ENCODE measurements at regions of chr3 and their contacts with region 1.

Region 1: DNA sequence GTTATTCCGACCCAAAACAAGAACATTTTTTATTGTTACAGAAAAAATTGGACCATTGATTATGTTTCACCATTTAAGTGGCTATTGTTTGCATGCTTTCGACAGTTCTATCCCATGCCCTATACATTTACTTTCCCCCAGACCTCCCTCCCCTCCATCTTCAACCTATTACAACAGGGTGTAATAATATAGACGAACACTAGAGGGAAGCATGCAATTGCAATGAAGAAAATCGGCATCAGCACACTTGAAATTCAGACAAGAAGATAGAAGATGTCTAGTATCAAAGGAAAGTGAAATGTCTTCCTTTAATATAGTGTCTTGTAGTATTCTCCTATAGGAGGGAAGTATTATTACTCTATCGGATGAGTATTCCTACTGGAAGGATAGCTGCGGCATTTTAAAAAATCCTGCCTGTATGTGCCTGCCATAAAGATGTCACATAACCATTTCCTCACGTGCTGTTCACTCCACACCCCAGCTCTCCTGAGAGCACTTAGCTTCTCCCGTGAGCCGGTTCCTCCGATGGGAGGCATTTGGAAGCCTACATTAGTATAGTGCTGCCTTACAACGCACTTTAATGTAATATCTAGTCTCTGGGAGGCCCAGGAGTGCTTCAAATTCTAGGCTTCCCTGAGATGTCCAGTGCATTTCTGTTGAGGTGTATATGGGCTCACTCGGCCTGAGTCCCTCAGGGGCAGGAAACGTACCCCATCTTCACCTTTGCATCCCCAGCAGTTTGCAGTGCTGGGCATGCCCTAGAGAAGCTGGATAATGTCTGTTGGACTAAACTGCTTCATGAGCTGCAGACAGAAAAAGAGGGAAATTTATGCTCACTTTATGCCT is 17.8 kb upstream of the ERICH6 start:
- DNase-seq: no peak
- H3K4me3 Mint-ChIP-seq: peak overlapping the region; percentile 29
- H3K27ac Mint-ChIP-seq: no peak overlapping the region
- H3K4me1 Mint-ChIP-seq: peaks cover 24% of the 10 kb centered on the region
- H3K27me3 Mint-ChIP-seq: no peaks in the 10 kb centered on the region

Region 2: DNA sequence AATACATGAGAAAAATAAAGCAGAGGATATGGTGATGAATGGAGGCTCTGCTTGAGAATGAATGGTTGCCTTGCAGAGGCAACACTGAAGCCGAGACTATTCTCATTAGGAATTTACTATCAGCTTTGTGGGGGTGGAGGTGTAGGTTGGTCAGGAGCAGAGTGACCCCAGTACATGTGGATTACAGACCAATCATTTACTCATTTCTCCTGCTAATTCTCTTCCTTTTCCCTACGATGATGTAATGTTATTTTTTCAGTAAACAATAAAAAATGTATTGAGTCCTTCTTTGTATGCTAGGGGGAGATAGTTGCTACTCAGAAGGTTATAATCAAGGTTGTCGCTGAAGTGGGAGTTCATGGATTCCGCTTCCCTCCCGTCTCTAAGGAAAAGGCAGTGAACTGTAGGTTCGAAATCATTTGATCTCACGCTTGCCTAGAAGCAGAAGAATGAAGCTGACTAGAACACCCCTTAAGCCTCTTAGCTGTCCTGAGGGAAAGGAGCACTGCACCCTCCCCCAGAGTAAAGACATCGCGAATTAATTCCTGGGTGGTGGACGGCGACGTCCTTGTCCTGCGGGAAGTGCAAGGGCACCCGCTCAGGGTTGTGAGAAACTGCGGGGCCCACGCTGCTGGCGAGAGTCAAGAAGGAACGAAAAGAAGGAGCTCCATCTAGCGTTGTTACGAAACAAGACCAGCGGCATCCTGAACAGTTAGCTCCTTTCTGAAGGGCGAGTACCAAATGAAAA is 537.7 kb before region 1 on chr3:
- CTCF ChIA-PET with region 1: no interaction called
- POLR2A ChIA-PET with region 1: no interaction called
- intact Hi-C with region 1: no loop called
- DNase-seq: peak; percentile 64
- H3K4me3 Mint-ChIP-seq: no peak overlapping the region
- H3K27ac Mint-ChIP-seq: no peak overlapping the region
- H3K4me1 Mint-ChIP-seq: no peaks in the 10 kb centered on the region
- H3K27me3 Mint-ChIP-seq: peaks cover 3% of the 10 kb centered on the region

Region 3: DNA sequence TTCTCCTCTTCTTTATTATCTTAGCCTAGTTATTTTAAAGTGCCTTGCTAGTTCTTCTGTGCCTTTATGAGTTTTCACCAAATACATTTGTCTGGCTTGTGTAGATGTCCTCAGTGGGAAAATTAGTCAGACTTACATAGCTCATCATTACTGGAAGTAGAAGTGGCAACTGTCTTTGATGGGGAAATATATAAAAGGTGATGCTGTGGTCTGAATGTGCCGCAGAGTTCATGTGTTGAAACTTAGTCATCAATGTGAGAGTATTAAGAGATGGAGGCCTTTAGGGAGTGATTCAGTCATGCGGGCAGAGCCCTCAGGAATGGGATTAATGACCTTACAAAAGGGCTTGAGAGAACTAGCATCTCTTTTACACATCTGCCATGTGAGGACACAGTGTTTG is 11.4 kb before region 1 on chr3:
- CTCF ChIA-PET with region 1: interaction called, 12 read pairs
- POLR2A ChIA-PET with region 1: no interaction called
- intact Hi-C with region 1: no loop called
- DNase-seq: no peak
- H3K4me3 Mint-ChIP-seq: no peak overlapping the region
- H3K27ac Mint-ChIP-seq: no peak overlapping the region
- H3K4me1 Mint-ChIP-seq: peaks cover 5% of the 10 kb centered on the region
- H3K27me3 Mint-ChIP-seq: no peaks in the 10 kb centered on the region

Region 4: GRCh38 chr3:150751753-150752263 is 30.3 kb after region 1 on chr3:
- CTCF ChIA-PET with region 1: interaction called, 13 read pairs
- POLR2A ChIA-PET with region 1: no interaction called
- intact Hi-C with region 1: no loop called
- DNase-seq: no peak
- H3K4me3 Mint-ChIP-seq: no peak overlapping the region
- H3K27ac Mint-ChIP-seq: peak overlapping the region; percentile 69
- H3K4me1 Mint-ChIP-seq: peaks cover 87% of the 10 kb centered on the region
- H3K27me3 Mint-ChIP-seq: no peaks in the 10 kb centered on the region

Region 5: GRCh38 chr3:150870396-150870795 is 148.9 kb after region 1 on chr3:
- CTCF ChIA-PET with region 1: interaction called, 46 read pairs
- POLR2A ChIA-PET with region 1: no interaction called
- intact Hi-C with region 1: loop called (anchors 1 kb)
- DNase-seq: no peak
- H3K4me3 Mint-ChIP-seq: no peak overlapping the region
- H3K27ac Mint-ChIP-seq: no peak overlapping the region
- H3K4me1 Mint-ChIP-seq: peaks cover 1% of the 10 kb centered on the region
- H3K27me3 Mint-ChIP-seq: peaks cover 14% of the 10 kb centered on the region